ENCODE measurements at regions of chr7 and their contacts with region 1.

Region 1: DNA sequence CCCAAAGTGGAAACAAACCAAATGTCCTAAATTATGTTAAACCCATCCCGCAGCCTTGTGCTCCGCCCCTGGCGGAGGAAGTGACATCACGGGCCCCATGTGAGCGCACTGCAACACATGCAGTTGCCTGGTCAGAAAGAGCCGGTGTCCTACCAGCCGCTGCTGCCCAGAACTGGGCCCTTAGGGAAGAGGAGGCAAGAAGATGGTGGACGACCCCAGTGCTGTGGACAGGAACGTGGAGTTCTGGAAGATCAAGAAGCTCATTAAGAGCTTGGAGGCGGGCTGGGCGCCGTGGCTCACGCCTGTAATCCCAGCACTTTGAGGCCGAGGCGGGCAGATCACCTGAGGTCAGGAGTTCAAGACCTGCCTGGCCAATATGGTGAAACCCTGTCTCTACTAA is 18.0 kb downstream of the RHEB start:
- DNase-seq: no peak
- ATAC-seq: no peak
- H3K4me3 Mint-ChIP-seq: no peak overlapping the region
- H3K27ac Mint-ChIP-seq: no peak overlapping the region
- H3K4me1 Mint-ChIP-seq: peaks cover 43% of the 10 kb centered on the region
- H3K27me3 Mint-ChIP-seq: no peaks in the 10 kb centered on the region
- CTCF ChIP-seq: no peak

Region 2: DNA sequence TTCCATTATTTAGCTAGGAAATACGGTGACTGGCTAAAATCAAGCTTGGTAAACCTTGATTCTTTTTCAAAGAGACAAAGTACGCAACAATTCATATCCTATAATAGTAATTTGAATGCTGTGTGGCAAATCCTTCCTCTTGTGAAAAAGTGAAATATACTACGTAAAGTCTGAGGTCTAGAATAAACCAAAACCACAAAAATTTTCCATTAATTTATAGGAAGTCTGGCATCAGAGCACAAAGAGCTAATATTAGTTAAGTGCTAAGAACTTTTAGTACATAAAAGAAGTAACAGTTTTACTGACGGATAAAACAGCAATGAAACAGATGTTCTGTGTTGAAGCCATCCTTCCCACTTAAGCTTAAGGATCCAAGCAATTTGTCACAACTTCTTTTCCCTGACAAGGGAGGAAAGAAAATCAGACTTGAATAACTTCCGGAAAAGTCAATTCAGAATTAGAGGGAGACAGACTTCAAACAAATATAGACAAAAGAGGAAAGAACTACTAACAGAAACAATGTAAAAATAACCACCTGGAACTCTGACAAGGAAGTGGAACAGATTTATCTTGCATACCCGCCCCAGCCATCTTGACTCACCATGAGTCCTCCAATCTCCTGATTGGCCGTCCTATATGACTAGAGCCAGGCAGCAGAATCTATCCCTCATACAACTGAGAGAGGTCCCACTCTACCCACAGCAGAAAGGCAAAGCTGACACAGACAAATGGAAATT is 16.5 kb before region 1 on chr7:
- CTCF ChIA-PET with region 1: no interaction called
- POLR2A ChIA-PET with region 1: no interaction called
- intact Hi-C with region 1: no loop called
- DNase-seq: no peak
- ATAC-seq: peak; percentile 37
- H3K4me3 Mint-ChIP-seq: no peak overlapping the region
- H3K27ac Mint-ChIP-seq: no peak overlapping the region
- H3K4me1 Mint-ChIP-seq: peaks cover 15% of the 10 kb centered on the region
- H3K27me3 Mint-ChIP-seq: no peaks in the 10 kb centered on the region
- CTCF ChIP-seq: no peak

Region 3: GRCh38 chr7:151514461-151515275 is 13.0 kb after region 1 on chr7:
- CTCF ChIA-PET with region 1: interaction called, 3 read pairs
- POLR2A ChIA-PET with region 1: interaction called, 3 read pairs
- intact Hi-C with region 1: loop called (anchors 2 kb)
- DNase-seq: no peak
- ATAC-seq: no peak
- H3K4me3 Mint-ChIP-seq: no peak overlapping the region
- H3K27ac Mint-ChIP-seq: no peak overlapping the region
- H3K4me1 Mint-ChIP-seq: peaks cover 61% of the 10 kb centered on the region
- H3K27me3 Mint-ChIP-seq: no peaks in the 10 kb centered on the region
- CTCF ChIP-seq: no peak

Measured in activated B cell treated with CpG ODN at 0.5 μM for 24 hours (primary cell).